GM10248 (cell line): ENCODE measurements at regions of chr17 and their contacts with region 1.

Region 1: GRCh38 chr17:28540231-28540630 is 12.2 kb downstream of the UNC119 start:
- DNase-seq: no peak
- CTCF ChIP-seq: no peak

Region 2: DNA sequence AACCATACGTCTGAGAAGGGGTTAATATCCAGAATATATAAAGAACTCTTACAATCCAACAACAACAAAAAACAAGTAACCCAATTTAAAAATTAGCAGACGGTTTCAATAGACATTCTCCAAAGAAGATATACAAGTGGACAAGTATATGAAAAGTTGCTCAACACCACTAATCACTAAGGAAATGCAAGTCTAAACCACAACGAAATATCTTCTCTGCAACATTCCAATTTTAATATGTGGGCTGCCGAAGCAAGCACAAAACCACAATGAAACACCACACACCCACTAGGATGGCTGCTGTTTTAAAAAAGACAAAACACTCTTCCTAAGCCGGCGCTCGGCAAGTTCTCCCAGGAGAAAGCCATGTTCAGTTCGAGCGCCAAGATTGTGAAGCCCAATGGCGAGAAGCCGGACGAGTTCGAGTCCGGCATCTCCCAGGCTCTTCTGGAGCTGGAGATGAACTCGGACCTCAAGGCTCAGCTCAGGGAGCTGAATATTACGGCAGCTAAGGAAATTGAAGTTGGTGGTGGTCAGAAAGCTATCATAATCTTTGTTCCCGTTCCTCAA is 72.7 kb before region 1 on chr17:
- CTCF ChIA-PET with region 1: no interaction called
- POLR2A ChIA-PET with region 1: no interaction called
- DNase-seq: no peak
- CTCF ChIP-seq: no peak

Region 3: DNA sequence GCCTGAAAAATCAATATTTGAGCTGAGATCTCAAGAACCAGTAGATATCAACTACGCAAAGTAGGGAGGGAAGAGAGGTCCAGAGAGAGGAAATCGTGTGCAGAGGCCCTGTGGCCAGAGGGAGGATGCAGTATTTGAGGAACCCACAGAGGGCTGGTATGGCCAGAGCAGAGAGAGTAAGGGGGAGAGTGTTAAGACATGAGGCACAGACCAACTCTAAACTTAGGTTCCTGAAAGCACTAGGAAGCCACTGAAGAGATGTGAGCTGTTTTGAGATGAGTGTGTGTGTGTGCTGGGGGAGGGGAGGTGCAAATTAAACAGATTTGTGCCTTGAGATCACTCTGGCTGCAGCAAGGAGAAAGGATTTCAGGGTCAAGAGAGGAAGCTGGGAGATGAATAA is 55.9 kb before region 1 on chr17:
- CTCF ChIA-PET with region 1: interaction called, 24 read pairs
- POLR2A ChIA-PET with region 1: no interaction called
- DNase-seq: peak; percentile 77
- CTCF ChIP-seq: no peak

Region 4: GRCh38 chr17:28524476-28525368 is 15.5 kb before region 1 on chr17:
- CTCF ChIA-PET with region 1: interaction called, 25 read pairs
- POLR2A ChIA-PET with region 1: no interaction called
- DNase-seq: no peak
- CTCF ChIP-seq: no peak

Region 5: GRCh38 chr17:28576758-28577465 is 36.7 kb after region 1 on chr17 and contains the start of gene ALDOC:
- CTCF ChIA-PET with region 1: interaction called, 12 read pairs
- POLR2A ChIA-PET with region 1: no interaction called
- DNase-seq: peak; percentile 99
- CTCF ChIP-seq: no peak